PC-9 (cell line): ENCODE measurements at regions of chr17 and their contacts with region 1.

Region 1: GRCh38 chr17:55601874-55602364 is 90.7 kb upstream of the SMIM36 start:
- DNase-seq: peak in 1 of 2 experiments; percentile 39
- H3K4me3 ChIP-seq: no peak overlapping the region
- H3K27ac ChIP-seq: no peak overlapping the region
- H3K4me1 ChIP-seq: no peaks in the 10 kb centered on the region
- H3K27me3 ChIP-seq: peaks cover 13% of the 10 kb centered on the region; the same call in 1 of the 2 replicates
- CTCF ChIP-seq: peak; percentile 84

Region 2: DNA sequence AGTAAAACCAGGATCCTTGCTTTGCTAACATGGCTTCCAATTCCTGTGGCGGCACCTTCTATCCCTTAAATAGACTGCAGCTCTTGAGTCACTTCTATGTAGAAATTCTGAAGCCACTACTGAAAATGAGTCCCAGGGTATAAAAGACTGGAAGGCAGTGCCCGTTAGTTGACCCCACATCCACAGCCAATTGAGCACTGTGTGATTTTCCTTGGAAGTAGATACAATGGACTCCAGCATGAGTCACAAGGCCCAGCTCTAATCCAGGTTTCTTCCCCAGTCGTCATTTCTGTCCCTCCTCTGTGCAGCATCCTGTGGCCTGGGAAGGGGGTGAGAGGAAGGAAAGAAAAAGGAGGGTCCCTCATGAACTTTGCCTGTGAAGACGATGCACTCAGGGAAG is 267.6 kb before region 1 on chr17:
- CTCF ChIA-PET with region 1: no interaction called
- POLR2A ChIA-PET with region 1: no interaction called
- intact Hi-C with region 1: no loop called
- DNase-seq: no peak
- H3K4me3 ChIP-seq: no peak overlapping the region
- H3K27ac ChIP-seq: no peak overlapping the region
- H3K4me1 ChIP-seq: peaks cover 11% of the 10 kb centered on the region
- H3K27me3 ChIP-seq: peaks cover 3% of the 10 kb centered on the region
- CTCF ChIP-seq: no peak

Region 3: GRCh38 chr17:55683554-55684315 is 81.8 kb after region 1 on chr17:
- CTCF ChIA-PET with region 1: no interaction called
- POLR2A ChIA-PET with region 1: no interaction called
- intact Hi-C with region 1: no loop called
- DNase-seq: no peak
- H3K4me3 ChIP-seq: no peak overlapping the region
- H3K27ac ChIP-seq: no peak overlapping the region
- H3K4me1 ChIP-seq: no peaks in the 10 kb centered on the region
- H3K27me3 ChIP-seq: peaks cover 39% of the 10 kb centered on the region
- CTCF ChIP-seq: no peak

Region 4: GRCh38 chr17:55770148-55770870 is 168.4 kb after region 1 on chr17:
- CTCF ChIA-PET with region 1: interaction called, 3 read pairs
- POLR2A ChIA-PET with region 1: no interaction called
- intact Hi-C with region 1: loop called (anchors 5 kb)
- DNase-seq: no peak
- H3K4me3 ChIP-seq: no peak overlapping the region
- H3K27ac ChIP-seq: no peak overlapping the region
- H3K4me1 ChIP-seq: peaks cover 13% of the 10 kb centered on the region
- H3K27me3 ChIP-seq: no peaks in the 10 kb centered on the region
- CTCF ChIP-seq: peak; percentile 84